ENCODE measurements at regions of chrX and their contacts with region 1.

Region 1: DNA sequence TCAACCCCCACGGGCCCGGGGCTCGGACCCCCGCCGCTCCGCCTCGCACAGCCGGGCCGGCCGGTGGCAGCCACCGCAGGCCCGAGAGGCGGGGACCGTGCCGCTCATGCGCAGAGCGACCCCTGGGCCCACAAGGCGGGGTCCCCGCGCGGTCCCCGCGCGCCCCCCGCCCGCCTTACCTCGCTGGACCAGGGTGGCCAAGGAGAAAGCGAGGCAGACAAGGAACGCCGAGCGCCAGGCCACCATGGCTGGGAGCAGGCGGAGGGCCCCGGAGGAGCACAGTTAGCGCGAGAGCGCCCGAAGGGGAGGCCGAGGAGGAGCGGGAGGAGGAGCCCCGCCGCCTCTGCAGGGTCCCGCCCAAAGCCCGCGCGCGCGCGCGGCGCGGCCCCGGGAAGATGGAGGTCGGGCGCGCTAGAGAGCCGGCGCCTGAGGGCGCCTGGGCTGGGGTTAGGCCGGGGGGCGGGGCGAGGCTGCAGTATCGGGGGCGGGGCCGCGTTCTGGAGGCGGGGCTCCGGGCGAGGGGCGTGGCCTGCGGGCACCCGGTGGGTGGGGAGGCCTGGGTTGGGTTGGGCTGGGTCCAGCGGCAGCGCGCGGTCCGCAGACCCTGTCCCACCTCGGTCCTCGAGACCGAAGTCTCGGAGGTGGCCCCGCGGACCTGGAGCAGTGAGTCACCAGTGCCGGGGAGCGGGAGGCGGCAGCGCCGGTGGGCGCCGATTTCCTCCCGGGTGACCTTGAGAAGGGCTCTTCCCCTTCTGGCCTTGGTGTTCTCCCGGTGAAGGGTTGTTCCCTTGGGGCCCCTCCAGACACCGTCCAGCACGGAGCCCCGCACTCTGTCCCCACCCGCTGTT is at the start of gene CD99L2:
- H3K4me3 Mint-ChIP-seq: peak within 1 kb of the TSS; percentile 83
- H3K27ac Mint-ChIP-seq: peak within 1 kb of the TSS; percentile 92
- H3K4me1 Mint-ChIP-seq: peaks cover 20% of the 10 kb centered on the region
- H3K27me3 Mint-ChIP-seq: peaks cover under 1% of the 10 kb centered on the region

Region 2: GRCh38 chrX:150655713-150656266 is 242.8 kb before region 1 on chrX:
- intact Hi-C with region 1: no loop called
- H3K4me3 Mint-ChIP-seq: no peak overlapping the region
- H3K27ac Mint-ChIP-seq: no peak overlapping the region
- H3K4me1 Mint-ChIP-seq: peaks cover 11% of the 10 kb centered on the region
- H3K27me3 Mint-ChIP-seq: no peaks in the 10 kb centered on the region

Region 3: GRCh38 chrX:150781677-150782076 is 116.9 kb before region 1 on chrX:
- intact Hi-C with region 1: loop called (anchors 10 kb)
- H3K4me3 Mint-ChIP-seq: no peak overlapping the region
- H3K27ac Mint-ChIP-seq: no peak overlapping the region
- H3K4me1 Mint-ChIP-seq: peaks cover 22% of the 10 kb centered on the region
- H3K27me3 Mint-ChIP-seq: no peaks in the 10 kb centered on the region

Region 4: GRCh38 chrX:150982788-150983520 is 84.4 kb after region 1 on chrX and contains the start of gene HMGB3:
- intact Hi-C with region 1: loop called (anchors 2 kb)
- H3K4me3 Mint-ChIP-seq: peak within 1 kb of the TSS; percentile 75
- H3K27ac Mint-ChIP-seq: peak within 1 kb of the TSS; percentile 74
- H3K4me1 Mint-ChIP-seq: peaks cover 21% of the 10 kb centered on the region
- H3K27me3 Mint-ChIP-seq: peaks cover 12% of the 10 kb centered on the region

Region 5: DNA sequence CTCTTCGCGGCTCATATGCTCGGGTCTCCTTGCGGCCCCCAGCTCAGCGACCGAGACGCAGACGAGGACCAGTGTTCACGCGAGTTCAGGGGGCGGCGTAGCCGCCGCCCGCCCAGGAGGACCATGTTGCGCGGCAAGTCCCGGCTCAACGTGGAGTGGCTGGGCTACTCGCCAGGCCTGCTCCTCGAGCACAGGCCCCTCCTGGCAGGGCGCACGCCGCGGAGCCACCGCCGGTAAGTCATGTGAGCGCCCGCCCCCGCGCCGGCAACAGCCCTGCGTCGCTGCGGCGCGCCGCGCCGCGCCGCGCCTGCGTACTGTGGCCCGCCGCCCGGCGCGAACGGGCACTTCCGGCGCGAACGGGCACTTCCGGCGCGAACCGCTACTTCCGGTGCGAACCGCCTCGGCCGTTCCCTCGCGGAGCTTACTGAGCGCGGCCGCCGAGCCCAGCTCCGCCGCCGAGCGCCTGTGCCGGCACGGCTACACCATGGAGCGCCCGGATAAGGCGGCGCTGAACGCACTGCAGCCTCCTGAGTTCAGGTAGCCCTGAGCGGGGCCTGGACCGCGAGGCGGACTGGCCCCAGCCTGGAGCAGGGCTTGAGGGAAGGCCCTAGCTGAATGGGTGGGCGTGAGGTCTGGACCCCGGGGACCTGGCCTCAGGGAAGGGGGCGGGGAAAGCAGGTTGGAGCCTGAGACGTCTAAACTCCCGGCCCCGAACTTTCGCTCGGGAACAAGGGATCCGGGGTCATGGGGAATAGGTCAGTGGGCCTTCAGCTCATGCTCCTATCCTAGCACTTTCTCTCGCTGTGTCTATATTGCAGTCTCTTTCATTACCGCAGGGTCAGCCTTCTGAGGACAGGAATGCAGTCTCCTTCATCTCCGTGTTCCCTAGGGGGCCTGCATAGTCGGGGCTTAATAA is 498.5 kb after region 1 on chrX and contains the start of gene VMA21:
- intact Hi-C with region 1: loop called (anchors 5 kb)
- H3K4me3 Mint-ChIP-seq: peak within 1 kb of the TSS; percentile 79
- H3K27ac Mint-ChIP-seq: peak within 1 kb of the TSS; percentile 94
- H3K4me1 Mint-ChIP-seq: peaks cover 20% of the 10 kb centered on the region
- H3K27me3 Mint-ChIP-seq: no peaks in the 10 kb centered on the region

Measured in dendritic cell treated with granulocyte-macrophage colony-stimulating factor and Interleukin-4, amounts not matched to agents 40 ng/mL and 50 ng/mL, for 4 days (primary cell).